ENCODE measurements at regions of chr6 and their contacts with region 1.

Region 1: GRCh38 chr6:33788694-33789549 is at the start of gene LEMD2:
- DNase-seq: peak; percentile 92
- H3K4me3 Mint-ChIP-seq: peak within 1 kb of the TSS; percentile 93
- H3K27ac Mint-ChIP-seq: peak within 1 kb of the TSS; percentile 96
- H3K4me1 Mint-ChIP-seq: peaks cover 43% of the 10 kb centered on the region
- H3K27me3 Mint-ChIP-seq: peaks cover 3% of the 10 kb centered on the region
- total RNA-seq, gene LEMD2: 63.6 and 64.4 TPM in 2 replicates

Region 2: DNA sequence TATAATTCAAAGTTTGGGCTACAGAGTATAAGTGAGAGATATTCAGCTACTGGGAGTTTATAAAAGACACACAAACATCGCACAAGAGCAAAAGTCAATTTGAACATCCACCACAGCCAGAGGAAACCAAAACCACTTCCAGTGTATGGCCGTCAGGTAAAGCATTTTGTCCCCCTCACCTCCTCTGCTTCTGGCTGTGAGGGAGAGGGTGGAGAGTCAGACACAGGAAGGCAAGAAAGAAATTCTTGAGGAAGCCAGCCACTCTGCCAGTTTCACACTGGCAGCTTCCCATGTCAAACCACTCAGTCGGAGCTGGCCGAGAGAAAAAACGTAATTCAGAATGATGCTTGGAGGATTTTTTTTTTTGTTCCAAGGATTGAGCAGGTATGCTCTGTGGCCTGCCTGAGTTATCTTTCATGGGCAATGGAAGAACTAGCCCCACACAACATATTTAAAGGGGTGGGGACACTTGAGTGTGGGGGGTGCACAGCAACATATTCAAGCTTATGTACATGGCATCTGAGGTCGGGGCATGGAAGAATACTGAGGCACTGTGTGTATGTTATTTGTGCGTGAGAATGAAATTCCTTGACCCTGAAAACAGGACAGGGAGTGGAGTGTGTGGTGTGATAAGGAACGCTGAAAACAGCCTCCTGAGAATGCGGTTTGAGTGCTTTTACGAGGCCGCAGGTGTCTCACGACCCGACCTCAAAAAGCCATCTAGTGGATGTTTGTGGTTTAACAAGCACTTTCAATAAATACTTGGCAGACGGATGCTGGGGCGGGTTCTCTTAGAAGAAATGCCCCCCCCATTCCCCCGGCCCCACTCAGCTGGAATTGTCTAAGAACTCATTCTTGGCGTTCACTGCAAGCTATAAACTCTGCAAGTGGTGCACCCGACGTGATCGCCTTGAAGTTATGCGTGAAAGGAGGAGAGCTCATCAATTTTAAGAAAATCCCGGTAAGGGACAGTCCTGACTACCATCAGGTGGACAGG is 443.9 kb before region 1 on chr6:
- intact Hi-C with region 1: loop called (anchors 10 kb)
- DNase-seq: peak; percentile 59
- H3K4me3 Mint-ChIP-seq: peak overlapping the region; percentile 77
- H3K27ac Mint-ChIP-seq: peak overlapping the region; percentile 82
- H3K4me1 Mint-ChIP-seq: peaks cover 26% of the 10 kb centered on the region
- H3K27me3 Mint-ChIP-seq: peaks cover 9% of the 10 kb centered on the region

Region 3: DNA sequence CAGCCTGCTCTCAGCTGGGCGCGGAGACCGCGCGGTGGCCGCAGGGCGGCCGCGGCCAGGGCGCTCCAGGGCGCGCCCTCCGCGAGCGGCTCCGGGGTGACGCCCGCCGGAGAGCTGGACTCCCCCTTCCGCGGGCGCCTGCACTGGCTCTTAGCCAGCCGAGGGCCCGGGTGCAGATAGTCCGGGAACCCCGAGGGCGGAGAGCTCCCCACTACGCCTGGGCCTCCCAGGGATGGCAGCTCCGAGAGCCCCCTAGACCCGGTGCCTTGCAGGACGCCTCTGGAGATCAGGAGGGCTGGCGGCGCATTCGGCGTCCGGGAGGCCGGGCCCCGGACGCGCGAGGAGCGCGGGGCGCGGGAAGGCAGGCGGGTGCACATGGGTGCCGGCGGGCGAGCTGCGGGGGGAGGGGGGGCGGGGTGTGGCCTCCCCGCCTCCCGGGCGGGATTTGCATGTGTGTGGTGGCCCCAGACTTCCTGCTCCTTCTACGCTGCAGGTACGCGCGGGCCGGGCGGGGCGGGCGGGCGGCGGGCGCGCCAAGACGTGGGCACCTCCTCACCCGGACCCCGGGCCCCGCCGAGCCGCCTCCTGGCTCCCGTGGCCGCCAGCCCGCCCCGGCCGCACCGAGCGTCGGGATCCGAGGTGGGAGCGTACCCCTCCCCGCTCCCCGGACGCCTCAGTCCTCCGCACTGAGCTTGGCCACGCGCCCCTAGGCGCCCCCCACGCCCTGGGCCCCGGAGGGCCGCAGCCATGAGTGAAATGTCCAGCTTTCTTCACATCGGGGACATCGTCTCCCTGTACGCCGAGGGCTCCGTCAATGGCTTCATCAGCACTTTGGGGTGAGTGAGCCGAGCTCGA is 167.8 kb before region 1 on chr6 and contains the start of gene ITPR3:
- intact Hi-C with region 1: loop called (anchors 1 kb)
- DNase-seq: peak; percentile 68
- H3K4me3 Mint-ChIP-seq: peak within 1 kb of the TSS; percentile 96
- H3K27ac Mint-ChIP-seq: peak within 1 kb of the TSS; percentile 90
- H3K4me1 Mint-ChIP-seq: peaks cover 49% of the 10 kb centered on the region
- H3K27me3 Mint-ChIP-seq: no peaks in the 10 kb centered on the region
- total RNA-seq, gene ITPR3: 42.7 and 42.9 TPM in 2 replicates

Region 4: DNA sequence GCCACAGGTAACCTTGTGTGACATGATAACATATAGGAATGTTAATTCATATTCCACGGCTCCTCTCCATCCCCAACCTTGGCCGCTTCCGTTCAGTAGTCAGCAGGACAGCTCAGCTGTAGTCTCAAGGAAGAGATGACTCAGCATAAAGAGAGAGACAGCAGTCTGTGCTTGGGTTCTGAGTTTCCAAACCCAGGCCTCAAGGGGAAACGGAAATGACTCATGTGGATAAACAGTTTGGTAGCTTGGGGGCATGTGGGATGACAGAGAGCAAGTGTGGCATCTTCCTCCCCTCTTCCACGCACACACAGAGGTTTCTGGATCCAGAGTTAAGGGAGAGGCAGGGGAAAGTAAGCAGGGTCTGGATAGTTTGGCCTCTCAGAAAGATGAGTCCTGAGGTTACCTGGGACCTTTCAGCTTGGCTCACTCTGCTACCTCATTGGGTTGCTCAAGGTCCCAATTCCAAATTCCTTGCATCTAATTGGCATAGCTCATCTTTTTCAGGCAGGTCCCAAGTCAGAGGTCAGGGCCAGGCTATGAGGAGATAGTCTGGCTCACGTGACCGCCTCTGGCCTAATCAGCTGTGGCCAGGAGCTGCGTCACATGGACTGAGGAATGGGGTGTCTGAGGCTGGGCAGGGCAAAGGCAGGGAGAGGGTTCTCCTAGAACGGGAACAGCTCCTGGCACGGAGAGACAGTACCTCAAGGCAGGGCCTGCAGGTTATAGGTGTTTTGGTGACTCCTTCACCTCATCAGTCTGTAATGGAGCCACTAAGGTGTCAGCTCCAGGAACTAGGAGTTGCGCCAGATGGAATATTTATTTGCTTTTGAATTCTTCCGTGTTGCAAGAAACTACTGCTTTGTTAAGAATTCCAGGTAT is 51.4 kb after region 1 on chr6:
- intact Hi-C with region 1: loop called (anchors 1 kb)
- DNase-seq: peak; percentile 48
- H3K4me3 Mint-ChIP-seq: peak overlapping the region; percentile 28
- H3K27ac Mint-ChIP-seq: peak overlapping the region; percentile 73
- H3K4me1 Mint-ChIP-seq: peaks cover 20% of the 10 kb centered on the region
- H3K27me3 Mint-ChIP-seq: peaks cover 11% of the 10 kb centered on the region

Region 5: DNA sequence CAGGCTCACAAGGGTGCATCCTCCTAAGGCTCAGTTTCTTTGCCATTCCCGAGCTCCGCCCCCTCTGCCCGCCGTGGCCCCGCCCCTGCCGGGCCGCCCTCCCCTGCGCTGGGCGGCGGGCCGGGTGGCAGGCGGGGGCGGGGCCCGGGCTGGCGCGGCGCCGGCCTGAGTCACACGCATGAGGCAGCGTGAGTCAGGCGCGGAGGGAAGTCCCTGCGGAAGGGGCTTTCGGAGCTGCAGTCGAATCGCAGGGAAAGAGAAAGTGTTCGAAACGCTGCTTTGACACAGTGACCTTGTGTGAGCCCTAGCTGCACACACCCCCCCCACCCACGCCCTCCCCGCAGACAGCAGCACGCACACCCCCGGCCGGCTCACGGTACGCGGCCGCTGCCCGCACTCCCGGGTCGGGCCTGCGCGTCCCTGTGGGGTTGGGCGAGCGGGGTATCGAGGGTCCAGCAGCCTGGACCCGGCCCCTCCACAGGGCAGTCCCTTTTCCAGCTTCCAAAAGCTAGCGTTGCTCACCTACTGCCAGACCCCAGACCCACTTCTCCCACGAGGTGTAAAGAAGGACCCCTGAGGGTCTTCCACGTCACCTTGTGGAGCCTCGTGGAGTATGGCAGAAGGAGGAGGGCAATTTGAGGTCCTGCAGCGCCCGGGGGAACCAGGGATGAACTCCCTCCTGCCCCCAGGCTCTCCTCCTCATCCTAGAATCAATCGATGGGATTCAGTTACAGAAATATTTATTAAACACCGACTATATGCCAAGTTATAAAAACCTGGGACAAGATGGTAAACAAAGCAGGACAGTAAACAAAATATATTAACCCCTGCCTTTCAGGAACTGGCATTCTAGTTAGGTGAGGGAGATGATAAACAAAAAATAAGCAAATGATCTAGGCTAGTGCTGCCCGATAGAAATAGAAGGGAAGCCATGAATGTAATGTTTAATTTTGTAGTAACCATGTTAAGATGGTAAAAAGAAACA is 435.3 kb after region 1 on chr6:
- intact Hi-C with region 1: loop called (anchors 10 kb)
- DNase-seq: peak; percentile 91
- H3K4me3 Mint-ChIP-seq: peak overlapping the region; percentile 64
- H3K27ac Mint-ChIP-seq: peak overlapping the region; percentile 76
- H3K4me1 Mint-ChIP-seq: peaks cover 28% of the 10 kb centered on the region
- H3K27me3 Mint-ChIP-seq: peaks cover 7% of the 10 kb centered on the region

Region 6: GRCh38 chr6:34526992-34527728 is 738.2 kb after region 1 on chr6:
- intact Hi-C with region 1: loop called (anchors 5 kb)
- DNase-seq: peak; percentile 91
- H3K4me3 Mint-ChIP-seq: peak overlapping the region; percentile 6
- H3K27ac Mint-ChIP-seq: no peak overlapping the region
- H3K4me1 Mint-ChIP-seq: no peaks in the 10 kb centered on the region
- H3K27me3 Mint-ChIP-seq: peaks cover 6% of the 10 kb centered on the region

Measured in activated T-helper 1 cell treated with anti-CD3 and anti-CD28 coated beads, Interleukin-12 subunit alpha, Interleukin-12 subunit beta, Interleukin-2, Interleukin-4 antibody, amounts not matched to agents 30 ng/mL and 10 ng/mL and 1 ng/mL, durations not matched to agents 14 hours and 24 hours and 36 hours (primary cell).